Heart left ventricle (tissue), 16 donors: ENCODE measurements at regions of chr6 and their contacts with region 1.

Region 1: GRCh38 chr6:149513915-149514314 is 29.1 kb upstream of the ZC3H12D start:
- DNase-seq: no peak
- ATAC-seq: peak in 2 of 4 donors; percentile 42 to 48
- H3K4me3 ChIP-seq: no peak overlapping the region
- H3K27ac ChIP-seq: no peak overlapping the region
- H3K4me1 ChIP-seq: peaks cover 0 to 7% (median 0%) of the 10 kb centered on the region in 12 donors
- H3K27me3 ChIP-seq: no peaks in the 10 kb centered on the region
- CTCF ChIP-seq: no peak
- POLR2A ChIP-seq: no peak

Region 2: DNA sequence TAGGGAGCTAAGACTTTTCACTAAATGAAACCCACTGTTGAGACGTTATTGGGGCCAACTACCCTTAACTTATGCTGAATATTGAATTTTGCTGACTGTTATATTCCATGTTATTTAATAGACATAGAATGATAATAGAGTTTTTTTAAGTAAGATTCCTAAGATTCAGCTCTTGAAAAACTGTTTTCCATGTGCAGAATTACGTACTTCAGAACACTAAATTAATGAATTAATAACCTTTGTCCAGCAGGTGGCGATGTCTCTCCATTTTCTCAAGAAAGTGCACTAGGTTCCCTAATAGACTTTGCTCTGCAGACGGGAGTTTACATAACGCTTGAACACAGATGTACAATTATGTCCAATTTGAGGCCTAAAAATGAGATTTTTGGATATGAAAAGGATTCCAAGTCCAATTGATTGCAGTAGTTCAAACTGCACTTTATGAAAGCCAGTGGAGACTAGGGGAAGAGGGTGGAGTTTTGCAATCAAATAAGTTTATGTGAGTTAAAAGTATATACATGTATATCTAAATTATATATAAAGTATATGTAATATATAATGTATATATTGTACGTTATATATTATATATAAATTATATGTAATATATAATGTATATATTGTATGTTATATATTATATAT is 485.0 kb before region 1 on chr6:
- intact Hi-C with region 1: loop called (anchors 1 to 5 kb)
- DNase-seq: peak in 4 of 5 donors; percentile 30 to 80 (median 62)
- ATAC-seq: peak; percentile 35 to 75 (median 70)
- H3K4me3 ChIP-seq: no peak overlapping the region
- H3K27ac ChIP-seq: no peak overlapping the region
- H3K4me1 ChIP-seq: peaks cover 0 to 18% (median 0%) of the 10 kb centered on the region in 12 donors
- H3K27me3 ChIP-seq: no peaks in the 10 kb centered on the region
- CTCF ChIP-seq: peak; percentile 64 to 91 (median 80)
- POLR2A ChIP-seq: no peak

Region 3: GRCh38 chr6:149082286-149082707 is 431.6 kb before region 1 on chr6:
- intact Hi-C with region 1: loop called in 6 of 10 experiments (anchors 5 kb)
- DNase-seq: peak; percentile 70 to 88 (median 76)
- ATAC-seq: peak in 3 of 4 donors; percentile 57 to 73 (median 69)
- H3K4me3 ChIP-seq: no peak overlapping the region
- H3K27ac ChIP-seq: no peak overlapping the region
- H3K4me1 ChIP-seq: peaks cover 0 to 21% (median 14%) of the 10 kb centered on the region in 12 donors
- H3K27me3 ChIP-seq: no peaks in the 10 kb centered on the region
- CTCF ChIP-seq: peak; percentile 70 to 89 (median 80)
- POLR2A ChIP-seq: no peak

Region 4: DNA sequence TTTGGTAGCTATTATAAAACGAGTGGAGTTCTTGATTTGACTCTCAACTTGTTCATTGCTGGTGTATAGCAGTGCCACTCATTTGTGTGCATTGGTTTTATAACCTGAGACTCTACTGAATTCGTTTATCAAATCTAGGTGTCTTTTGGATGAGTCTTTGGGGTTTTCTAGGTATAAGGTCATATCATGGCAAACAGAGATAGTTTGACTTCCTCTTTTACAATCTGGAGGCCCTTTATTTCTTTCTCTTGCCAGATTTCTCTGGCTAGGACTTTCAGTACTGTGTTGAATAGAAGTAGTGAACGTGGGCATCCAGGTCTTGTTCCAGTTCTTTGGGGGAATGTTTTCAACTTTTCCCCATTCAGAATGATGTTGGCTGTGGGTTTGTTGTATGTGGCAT is 75.1 kb before region 1 on chr6:
- intact Hi-C with region 1: loop called in 5 of 10 experiments (anchors 5 to 10 kb)
- DNase-seq: no peak
- ATAC-seq: no peak
- H3K4me3 ChIP-seq: no peak overlapping the region
- H3K27ac ChIP-seq: no peak overlapping the region
- H3K4me1 ChIP-seq: no peaks in the 10 kb centered on the region
- H3K27me3 ChIP-seq: peaks cover 0 to 9% (median 0%) of the 10 kb centered on the region in 9 donors
- CTCF ChIP-seq: no peak
- POLR2A ChIP-seq: no peak

Region 5: GRCh38 chr6:149454386-149454848 is 59.5 kb before region 1 on chr6:
- intact Hi-C with region 1: loop called in 6 of 10 experiments (anchors 5 to 10 kb)
- DNase-seq: peak; percentile 96 to 99 (median 97)
- ATAC-seq: peak; percentile 90 to 96 (median 93)
- H3K4me3 ChIP-seq: peak overlapping the region in 4 of 12 donors; percentile 6 to 29 (median 18)
- H3K27ac ChIP-seq: peak overlapping the region; percentile 51 to 91 (median 80)
- H3K4me1 ChIP-seq: peaks cover 4 to 65% (median 50%) of the 10 kb centered on the region in 12 donors
- H3K27me3 ChIP-seq: peaks cover 0 to 31% (median 7%) of the 10 kb centered on the region in 9 donors
- CTCF ChIP-seq: no peak
- POLR2A ChIP-seq: peak in 1 of 2 donors; percentile 27

Region 6: GRCh38 chr6:149459761-149460160 is 54.2 kb before region 1 on chr6:
- intact Hi-C with region 1: loop called in 6 of 10 experiments (anchors 5 to 10 kb)
- DNase-seq: no peak
- ATAC-seq: no peak
- H3K4me3 ChIP-seq: no peak overlapping the region
- H3K27ac ChIP-seq: no peak overlapping the region
- H3K4me1 ChIP-seq: peaks cover 0 to 28% (median 21%) of the 10 kb centered on the region in 12 donors
- H3K27me3 ChIP-seq: peaks cover 0 to 14% (median 0%) of the 10 kb centered on the region in 9 donors
- CTCF ChIP-seq: no peak
- POLR2A ChIP-seq: no peak

Region 7: DNA sequence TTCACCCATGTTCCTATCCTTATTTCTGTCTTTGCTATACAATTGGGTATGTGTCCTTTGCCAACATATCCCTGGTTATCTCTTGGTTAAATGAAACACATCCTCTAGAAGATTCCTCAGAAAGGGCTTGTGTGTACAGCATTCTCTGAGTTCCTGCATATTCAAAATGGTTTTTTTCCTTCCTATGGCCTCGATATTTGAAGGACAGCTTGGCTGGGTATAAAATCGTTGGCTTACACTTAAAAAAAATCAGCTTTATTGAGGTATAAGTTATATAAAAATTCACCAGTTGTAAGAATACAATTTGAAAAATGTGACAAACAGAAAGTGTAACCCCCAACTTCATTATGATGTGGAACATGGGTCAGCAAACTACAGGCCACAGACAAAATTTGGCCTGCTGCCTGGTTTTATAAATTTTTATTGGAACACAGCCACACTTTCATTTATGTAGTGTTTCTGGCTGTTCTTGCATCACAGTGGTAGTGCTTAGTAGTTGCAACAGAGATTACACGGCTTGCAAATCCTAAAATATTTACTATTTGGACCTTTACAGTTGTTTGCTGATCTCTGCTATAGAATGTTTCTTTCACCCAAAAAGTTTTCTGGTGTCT is 252.3 kb after region 1 on chr6:
- intact Hi-C with region 1: no loop called
- DNase-seq: no peak
- ATAC-seq: no peak
- H3K4me3 ChIP-seq: no peak overlapping the region
- H3K27ac ChIP-seq: peak overlapping the region in 1 of 12 donors; percentile 74
- H3K4me1 ChIP-seq: peaks cover 0 to 32% (median 0%) of the 10 kb centered on the region in 12 donors
- H3K27me3 ChIP-seq: no peaks in the 10 kb centered on the region
- CTCF ChIP-seq: no peak
- POLR2A ChIP-seq: no peak

Region 8: GRCh38 chr6:150057501-150057951 is 543.6 kb after region 1 on chr6:
- intact Hi-C with region 1: no loop called
- DNase-seq: no peak
- ATAC-seq: no peak
- H3K4me3 ChIP-seq: no peak overlapping the region
- H3K27ac ChIP-seq: no peak overlapping the region
- H3K4me1 ChIP-seq: no peaks in the 10 kb centered on the region
- H3K27me3 ChIP-seq: peaks cover 0 to 44% (median 5%) of the 10 kb centered on the region in 9 donors
- CTCF ChIP-seq: no peak
- POLR2A ChIP-seq: no peak